ENCODE measurements at regions of chr1 and their contacts with region 1.

Region 1: GRCh38 chr1:162878000-162878596 is 17.1 kb upstream of the CCDC190 start:
- H3K4me3 ChIP-seq: no peak overlapping the region
- H3K27ac ChIP-seq: no peak overlapping the region
- H3K4me1 ChIP-seq: no peaks in the 10 kb centered on the region
- CTCF ChIP-seq: peak; percentile 73

Region 2: DNA sequence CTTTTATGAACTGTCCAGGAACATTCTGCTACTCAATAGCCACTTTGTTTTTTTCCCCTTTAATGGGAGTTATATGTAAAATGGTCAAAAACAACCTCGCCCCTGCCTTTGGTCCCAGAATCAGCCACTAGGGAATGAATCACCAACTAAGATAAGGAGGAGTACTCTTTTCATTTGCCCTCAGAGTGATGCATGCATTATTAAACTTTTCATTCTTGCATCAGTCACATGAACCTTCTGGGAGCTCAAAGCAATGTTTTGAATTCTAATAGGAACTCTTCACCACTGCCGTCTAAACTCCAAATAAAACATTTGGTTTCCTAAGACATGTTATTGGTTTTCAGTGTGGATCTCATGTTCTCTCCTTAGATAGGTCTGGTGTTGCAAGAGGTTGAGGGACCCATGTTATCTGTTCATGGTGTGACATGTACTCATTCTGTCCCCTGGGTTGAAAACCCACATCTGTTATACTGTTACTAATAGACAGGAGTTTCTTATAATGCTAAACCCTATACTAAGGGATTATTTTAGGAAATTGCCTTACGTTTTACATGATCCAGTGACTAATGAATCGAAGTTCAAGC is 105.4 kb before region 1 on chr1:
- CTCF ChIA-PET with region 1: no interaction called
- POLR2A ChIA-PET with region 1: no interaction called
- H3K4me3 ChIP-seq: no peak overlapping the region
- H3K27ac ChIP-seq: no peak overlapping the region
- H3K4me1 ChIP-seq: no peaks in the 10 kb centered on the region
- CTCF ChIP-seq: no peak

Region 3: GRCh38 chr1:162835157-162835899 is 42.8 kb before region 1 on chr1:
- CTCF ChIA-PET with region 1: no interaction called
- POLR2A ChIA-PET with region 1: no interaction called
- H3K4me3 ChIP-seq: no peak overlapping the region
- H3K27ac ChIP-seq: no peak overlapping the region
- H3K4me1 ChIP-seq: no peaks in the 10 kb centered on the region
- CTCF ChIP-seq: no peak

Region 4: DNA sequence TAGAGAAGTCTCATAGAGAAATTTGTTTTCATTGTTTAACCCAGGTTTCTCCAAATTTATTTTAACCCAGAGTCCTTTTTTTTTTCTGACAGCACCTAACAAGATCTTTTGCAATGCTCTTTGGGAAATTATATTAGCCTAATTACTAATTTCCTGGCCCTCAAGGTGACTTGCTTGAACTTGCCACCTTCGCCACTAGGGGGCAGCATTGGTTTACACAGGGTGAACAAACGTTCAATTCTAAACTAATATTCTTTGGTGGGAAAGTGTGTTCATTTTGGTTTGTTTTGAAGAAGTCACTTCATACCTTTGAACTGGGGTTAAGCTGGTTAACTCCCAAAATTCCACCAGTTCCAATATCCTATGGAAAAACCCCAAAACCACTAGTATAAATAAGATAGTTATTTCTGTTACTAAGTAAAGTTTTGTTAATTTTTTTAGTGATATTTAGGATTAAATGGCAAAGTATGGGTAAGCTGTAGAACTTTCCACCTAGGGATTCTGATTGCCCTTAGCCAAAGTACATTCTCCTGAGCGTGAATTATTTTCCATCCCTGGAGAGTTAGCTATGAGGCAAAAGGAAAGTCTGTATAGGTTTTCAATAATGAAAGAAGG is 30.2 kb before region 1 on chr1:
- CTCF ChIA-PET with region 1: interaction called, 19 read pairs
- POLR2A ChIA-PET with region 1: no interaction called
- H3K4me3 ChIP-seq: no peak overlapping the region
- H3K27ac ChIP-seq: no peak overlapping the region
- H3K4me1 ChIP-seq: peaks cover 6% of the 10 kb centered on the region
- CTCF ChIP-seq: peak; percentile 60

Region 5: DNA sequence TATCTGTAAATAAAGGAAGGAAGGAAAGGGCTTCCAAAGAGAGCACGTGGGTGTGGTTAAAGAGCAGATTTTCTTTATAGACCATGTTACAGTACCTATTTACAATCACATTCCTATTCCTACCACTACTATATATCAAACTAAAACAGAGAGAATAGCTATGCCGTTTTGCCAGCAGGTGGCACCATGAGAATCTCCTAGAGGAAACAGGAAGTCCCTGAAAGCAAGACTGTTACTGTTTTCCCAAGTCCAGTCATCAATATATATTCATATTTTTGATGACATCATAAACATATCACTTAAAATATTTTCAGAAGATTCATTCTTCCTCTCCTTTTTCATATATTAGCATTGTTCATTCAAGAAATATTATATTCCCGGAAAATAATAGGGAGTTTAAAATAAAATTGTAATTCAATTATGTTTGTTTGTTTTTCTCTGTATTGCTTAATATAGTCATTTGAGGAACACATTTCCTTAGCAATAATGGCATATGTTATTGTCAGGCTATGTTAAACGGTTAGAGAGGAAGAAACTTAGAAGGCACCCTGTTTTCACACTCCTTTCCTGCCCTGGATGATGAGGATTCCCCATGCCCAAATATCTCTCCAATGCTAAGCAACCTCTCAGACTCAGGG is 23.7 kb before region 1 on chr1:
- CTCF ChIA-PET with region 1: interaction called, 19 read pairs
- POLR2A ChIA-PET with region 1: no interaction called
- H3K4me3 ChIP-seq: no peak overlapping the region
- H3K27ac ChIP-seq: no peak overlapping the region
- H3K4me1 ChIP-seq: peaks cover 7% of the 10 kb centered on the region; the same call in 1 of the 2 replicates
- CTCF ChIP-seq: peak; percentile 36; the same call in 1 of the 2 replicates

Region 6: GRCh38 chr1:162987866-162988265 is 109.8 kb after region 1 on chr1:
- CTCF ChIA-PET with region 1: interaction called, 10 read pairs
- POLR2A ChIA-PET with region 1: no interaction called
- H3K4me3 ChIP-seq: no peak overlapping the region
- H3K27ac ChIP-seq: no peak overlapping the region
- H3K4me1 ChIP-seq: no peaks in the 10 kb centered on the region
- CTCF ChIP-seq: no peak

Region 7: DNA sequence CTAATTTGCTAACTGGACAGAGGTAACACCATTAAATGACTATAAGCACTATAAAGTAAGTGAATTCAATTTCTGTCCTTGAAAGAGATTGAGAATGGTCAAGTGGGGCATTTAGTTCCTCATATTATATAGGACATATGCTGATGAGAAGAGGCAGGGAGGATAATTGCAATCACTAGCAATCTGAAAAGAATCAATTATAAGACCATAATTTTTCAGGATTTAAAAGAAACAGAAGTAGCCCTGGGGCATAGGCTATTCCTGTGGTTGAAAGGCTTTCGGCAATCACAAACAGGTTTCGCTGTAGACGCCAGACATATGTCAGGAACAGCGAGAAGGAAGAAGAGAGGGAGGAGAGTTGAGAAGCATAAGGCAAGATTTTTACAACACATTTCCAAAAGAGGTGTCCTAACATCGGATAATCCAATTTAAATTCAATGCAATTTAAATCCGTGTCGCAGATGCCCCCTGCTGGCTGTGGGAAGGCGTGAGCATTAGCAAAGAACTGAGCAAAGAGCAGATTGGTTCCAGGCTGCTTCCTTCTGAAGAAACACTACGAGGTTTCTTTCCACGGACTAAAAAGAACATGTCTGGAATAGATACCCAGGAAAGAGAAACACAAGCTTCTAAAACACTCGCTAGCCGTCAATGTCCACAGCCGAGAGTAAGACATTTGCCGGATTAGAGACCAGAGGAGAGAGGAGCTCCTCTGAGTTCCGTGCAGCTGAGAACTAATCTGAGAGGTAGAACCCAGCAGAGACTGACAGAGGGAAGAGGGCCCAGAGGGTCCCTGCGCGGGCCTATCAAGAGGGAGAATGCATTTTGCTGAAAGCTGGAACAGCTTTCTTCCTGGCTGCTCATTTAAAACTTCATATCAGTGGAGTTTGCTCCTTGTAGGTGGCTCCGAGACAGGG is 296.7 kb after region 1 on chr1:
- CTCF ChIA-PET with region 1: interaction called, 23 read pairs
- POLR2A ChIA-PET with region 1: no interaction called
- H3K4me3 ChIP-seq: no peak overlapping the region
- H3K27ac ChIP-seq: no peak overlapping the region
- H3K4me1 ChIP-seq: peaks cover 7% of the 10 kb centered on the region; the same call in 1 of the 2 replicates
- CTCF ChIP-seq: peak; percentile 62

Region 8: DNA sequence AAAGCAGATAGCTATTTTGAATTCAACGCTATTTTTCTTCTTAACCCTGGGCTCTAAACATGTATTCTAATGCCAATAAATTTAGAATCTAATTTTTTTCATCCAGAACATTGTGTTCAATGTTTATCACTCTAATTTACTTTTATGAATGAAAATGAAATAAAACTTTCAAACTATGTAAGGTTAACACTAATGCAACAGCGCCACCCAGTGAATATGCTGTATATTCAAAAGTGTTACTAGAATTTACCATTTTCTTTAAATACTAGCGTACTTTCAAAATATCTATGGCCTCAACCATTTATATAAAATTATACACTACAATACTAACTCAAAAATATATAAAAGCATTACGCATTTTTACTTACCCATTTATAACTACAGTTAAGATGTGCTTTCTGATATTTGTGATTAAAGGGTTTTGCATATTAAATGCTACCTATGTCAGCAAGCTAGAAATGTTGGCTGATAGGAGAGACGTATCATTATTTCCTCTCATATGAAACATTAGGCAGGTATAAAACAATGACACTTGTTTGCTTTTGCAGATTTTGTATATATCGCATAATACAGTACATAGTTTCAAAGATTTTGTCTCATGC is 437.8 kb after region 1 on chr1:
- CTCF ChIA-PET with region 1: interaction called, 37 read pairs
- POLR2A ChIA-PET with region 1: no interaction called
- H3K4me3 ChIP-seq: no peak overlapping the region
- H3K27ac ChIP-seq: no peak overlapping the region
- H3K4me1 ChIP-seq: no peaks in the 10 kb centered on the region
- CTCF ChIP-seq: no peak

Measured in HEK293 (cell line).